ENCODE measurements at regions of chr13 and their contacts with region 1.

Region 1: DNA sequence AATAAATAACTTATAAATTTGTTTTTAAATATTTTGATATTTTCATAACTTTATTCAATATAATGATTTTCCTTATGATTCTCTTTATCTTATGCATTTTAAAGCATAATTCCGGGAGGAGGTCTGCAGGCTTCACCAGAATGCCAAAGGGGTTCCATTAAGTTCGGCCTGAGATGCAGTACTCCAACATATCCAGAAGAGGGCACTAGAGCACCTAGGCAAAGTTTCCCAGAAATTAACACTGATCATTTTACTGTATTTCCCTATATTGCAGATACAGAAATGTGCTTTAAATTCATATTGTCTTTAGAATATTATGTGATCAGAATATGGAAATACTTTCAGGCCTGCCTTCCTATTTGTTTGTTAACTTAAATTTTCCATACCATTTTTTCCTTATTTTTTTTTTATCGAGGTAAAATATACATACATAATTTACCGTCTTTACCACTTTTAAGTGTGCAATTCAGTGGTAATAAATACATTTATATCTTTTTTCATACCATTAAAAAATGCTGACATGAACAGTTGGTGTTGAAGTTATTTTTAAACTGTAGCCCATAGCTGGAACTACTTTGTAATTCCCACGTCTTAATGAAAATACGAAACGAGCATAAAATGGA is 58.9 kb upstream of the TM9SF2 start:
- DNase-seq: no peak
- ATAC-seq: peak; percentile 34

Region 2: DNA sequence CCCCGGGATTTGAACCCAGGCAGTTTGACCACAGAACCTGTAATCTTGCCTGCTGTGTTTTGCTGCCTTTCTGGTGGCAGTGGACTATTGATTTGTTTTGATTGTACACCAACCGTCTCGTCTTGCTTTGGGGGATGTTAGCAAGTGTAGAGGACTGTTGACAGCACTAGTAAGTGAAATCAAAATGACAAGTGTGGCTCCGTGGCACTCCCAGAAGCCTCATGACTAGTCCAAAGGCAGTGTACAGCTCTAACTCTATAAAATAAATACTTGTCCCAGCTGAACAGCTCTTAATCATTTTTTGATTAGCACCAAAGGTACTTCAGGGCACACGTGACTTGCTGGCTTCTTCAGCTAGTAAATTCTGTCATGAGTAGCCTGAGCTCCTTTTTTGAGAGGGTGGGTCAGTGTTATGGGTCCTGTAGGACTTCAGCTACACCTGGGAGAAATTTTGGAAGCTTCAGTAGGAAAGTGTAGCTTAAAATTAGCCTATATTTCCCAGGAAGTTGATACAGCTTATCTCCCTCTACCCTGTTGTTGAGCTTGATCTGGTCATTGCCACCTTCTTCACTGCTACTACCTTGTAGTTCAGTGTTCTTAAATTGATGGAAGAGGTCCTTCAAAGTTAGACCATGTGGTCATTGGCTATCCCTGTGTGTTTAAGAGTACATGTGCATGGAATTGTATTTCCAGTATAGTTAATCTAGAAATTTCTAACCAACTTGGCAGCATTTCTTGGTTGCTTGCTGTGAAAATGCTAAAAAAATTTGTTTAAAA is 74.0 kb after region 1 on chr13:
- intact Hi-C with region 1: loop called (anchors 10 kb)
- DNase-seq: no peak
- ATAC-seq: peak; percentile 60

Region 3: DNA sequence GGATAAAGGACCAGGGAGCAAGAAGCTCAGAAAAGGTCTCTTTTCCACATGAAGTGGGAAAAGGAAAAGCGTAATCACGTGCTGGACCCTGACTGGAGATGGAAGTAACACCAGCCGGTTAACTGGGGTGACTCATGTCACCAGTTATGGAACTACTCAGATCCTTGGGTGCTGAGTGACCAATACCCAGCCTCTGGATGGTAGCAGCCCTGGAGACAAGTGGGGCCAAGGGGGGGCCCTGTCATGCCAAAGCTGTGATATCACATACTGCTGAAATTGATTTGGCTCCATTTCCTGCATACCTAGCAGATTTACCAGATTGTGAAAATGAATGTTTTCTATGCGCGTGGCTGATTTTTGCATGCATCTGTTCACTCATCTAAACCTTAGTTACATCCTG is 370.2 kb after region 1 on chr13:
- intact Hi-C with region 1: no loop called
- DNase-seq: no peak
- ATAC-seq: no peak

Measured in left ventricle myocardium superior (tissue), 1 donor.